GM23248 (cell line): ENCODE measurements at regions of chr1 and their contacts with region 1.

Region 1: DNA sequence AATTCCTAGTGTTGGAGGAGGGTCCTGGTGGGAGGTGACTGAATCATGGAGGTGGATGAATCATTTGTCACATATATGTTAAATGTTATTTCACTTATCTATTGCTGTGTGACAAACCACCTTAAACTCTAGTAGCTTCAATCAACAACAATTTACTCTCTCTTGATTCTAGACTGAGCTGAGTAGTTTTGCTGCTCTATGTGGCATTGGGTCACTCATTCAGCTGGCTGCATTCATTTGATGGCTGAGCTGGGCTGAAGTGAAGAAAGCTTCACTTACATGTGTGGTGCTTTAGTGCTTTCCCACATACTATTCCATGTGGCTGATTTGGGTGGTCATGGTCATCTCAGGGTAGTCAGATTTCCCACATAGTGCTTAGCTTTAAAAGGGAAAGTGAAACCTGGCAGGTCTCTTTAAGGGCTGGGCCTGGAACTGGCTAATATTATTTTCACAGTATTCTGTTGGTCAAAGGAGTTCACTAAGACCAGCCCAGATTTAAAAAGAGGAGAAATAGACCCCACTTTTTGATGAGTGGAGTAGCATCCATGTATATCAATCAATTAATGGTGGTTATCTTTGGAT is 10.5 kb downstream of the DNAH14 start:
- DNase-seq: no peak
- H3K4me3 ChIP-seq: no peak overlapping the region
- H3K27ac ChIP-seq: no peak overlapping the region
- H3K4me1 ChIP-seq: no peaks in the 10 kb centered on the region
- H3K27me3 ChIP-seq: no peaks in the 10 kb centered on the region

Region 2: DNA sequence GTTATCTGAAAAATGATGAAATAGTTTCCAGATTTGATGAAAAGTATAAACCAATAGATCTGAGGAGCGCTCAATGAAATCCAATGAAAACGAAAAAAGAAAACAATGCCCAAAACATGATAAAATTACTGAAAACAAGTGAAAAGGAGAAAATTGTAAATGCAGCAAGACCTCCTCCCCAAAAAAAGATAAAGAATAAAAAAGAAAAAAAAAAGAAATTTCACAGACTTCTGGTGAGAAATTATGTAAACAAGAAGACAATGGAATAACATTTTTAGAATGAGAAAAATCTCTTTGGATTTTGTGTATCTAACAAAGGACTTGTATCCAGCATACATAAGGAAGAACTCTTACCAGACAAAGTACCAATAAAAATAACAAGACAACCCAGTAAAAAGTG is 123.8 kb after region 1 on chr1:
- in situ Hi-C with region 1: loop called (anchors 5 kb)
- DNase-seq: no peak
- H3K4me3 ChIP-seq: no peak overlapping the region
- H3K27ac ChIP-seq: no peak overlapping the region
- H3K4me1 ChIP-seq: no peaks in the 10 kb centered on the region
- H3K27me3 ChIP-seq: no peaks in the 10 kb centered on the region